MCF 10A (cell line): ENCODE measurements at regions of chr12 and their contacts with region 1.

Region 1: DNA sequence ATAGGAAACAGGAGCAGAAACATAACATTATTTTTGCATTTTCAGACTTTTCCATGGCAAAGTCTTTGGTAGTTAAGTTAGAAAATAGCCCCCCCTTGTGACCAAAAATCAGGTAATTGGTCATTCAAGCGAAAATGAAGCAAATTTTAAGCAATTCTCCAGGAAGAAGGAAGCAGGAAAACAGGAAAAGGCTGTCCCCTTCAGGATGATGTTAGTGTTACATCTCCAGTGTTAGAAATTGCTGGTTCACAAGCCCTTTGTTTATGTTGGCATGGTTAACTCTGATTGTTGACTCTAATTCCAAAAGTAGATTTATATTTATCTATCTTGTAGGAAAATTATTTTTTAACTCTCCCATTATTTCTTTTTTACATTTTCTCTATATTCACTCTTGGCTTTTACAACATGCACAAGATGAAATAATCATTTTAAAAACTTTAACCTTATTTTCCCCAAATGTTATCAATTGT is 18.8 kb upstream of the GAS2L3 start:
- DNase-seq: peak; percentile 91
- H3K4me3 Mint-ChIP-seq: no peak overlapping the region
- H3K27ac Mint-ChIP-seq: no peak overlapping the region
- H3K4me1 Mint-ChIP-seq: no peaks in the 10 kb centered on the region
- H3K27me3 Mint-ChIP-seq: no peaks in the 10 kb centered on the region
- CTCF ChIP-seq: peak; percentile 91

Region 2: GRCh38 chr12:100234598-100235304 is 319.9 kb before region 1 on chr12:
- CTCF ChIA-PET with region 1: interaction called, 12 read pairs
- POLR2A ChIA-PET with region 1: no interaction called
- intact Hi-C with region 1: loop called (anchors 1 kb)
- DNase-seq: peak; percentile 56
- H3K4me3 Mint-ChIP-seq: no peak overlapping the region
- H3K27ac Mint-ChIP-seq: no peak overlapping the region
- H3K4me1 Mint-ChIP-seq: peaks cover 6% of the 10 kb centered on the region
- H3K27me3 Mint-ChIP-seq: no peaks in the 10 kb centered on the region
- CTCF ChIP-seq: peak; percentile 60

Region 3: DNA sequence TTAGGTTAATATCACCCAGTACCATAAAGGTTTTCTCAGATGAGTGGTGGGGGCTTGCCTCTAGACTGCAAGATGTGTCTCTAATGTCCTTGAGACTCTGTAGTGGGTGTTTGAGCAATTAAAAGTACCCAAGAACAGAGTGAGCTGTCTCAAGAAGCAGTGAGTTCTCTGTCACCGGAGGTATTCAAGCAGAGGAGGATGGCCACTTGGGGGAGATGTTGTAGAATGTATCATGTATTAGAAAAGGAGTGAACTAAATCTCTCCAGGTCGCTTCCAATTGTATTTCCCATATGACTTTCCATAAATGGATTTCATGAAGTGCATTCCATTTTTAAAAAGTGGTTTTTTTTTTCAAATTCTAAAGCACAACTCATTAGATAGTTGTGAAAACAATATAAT is 162.8 kb before region 1 on chr12:
- CTCF ChIA-PET with region 1: interaction called, 8 read pairs
- POLR2A ChIA-PET with region 1: no interaction called
- intact Hi-C with region 1: loop called (anchors 1 kb)
- DNase-seq: peak; percentile 35
- H3K4me3 Mint-ChIP-seq: no peak overlapping the region
- H3K27ac Mint-ChIP-seq: no peak overlapping the region
- H3K4me1 Mint-ChIP-seq: no peaks in the 10 kb centered on the region
- H3K27me3 Mint-ChIP-seq: no peaks in the 10 kb centered on the region
- CTCF ChIP-seq: peak; percentile 28

Region 4: GRCh38 chr12:100481021-100481420 is 73.6 kb before region 1 on chr12:
- CTCF ChIA-PET with region 1: interaction called, 10 read pairs
- POLR2A ChIA-PET with region 1: no interaction called
- intact Hi-C with region 1: no loop called
- DNase-seq: no peak
- H3K4me3 Mint-ChIP-seq: no peak overlapping the region
- H3K27ac Mint-ChIP-seq: no peak overlapping the region
- H3K4me1 Mint-ChIP-seq: no peaks in the 10 kb centered on the region
- H3K27me3 Mint-ChIP-seq: peaks cover 36% of the 10 kb centered on the region
- CTCF ChIP-seq: no peak